Dendritic cell treated with granulocyte-macrophage colony-stimulating factor and Interleukin-4, amounts not matched to agents 40 ng/mL and 50 ng/mL, for 4 days (primary cell): ENCODE measurements at regions of chr3 and their contacts with region 1.

Region 1: DNA sequence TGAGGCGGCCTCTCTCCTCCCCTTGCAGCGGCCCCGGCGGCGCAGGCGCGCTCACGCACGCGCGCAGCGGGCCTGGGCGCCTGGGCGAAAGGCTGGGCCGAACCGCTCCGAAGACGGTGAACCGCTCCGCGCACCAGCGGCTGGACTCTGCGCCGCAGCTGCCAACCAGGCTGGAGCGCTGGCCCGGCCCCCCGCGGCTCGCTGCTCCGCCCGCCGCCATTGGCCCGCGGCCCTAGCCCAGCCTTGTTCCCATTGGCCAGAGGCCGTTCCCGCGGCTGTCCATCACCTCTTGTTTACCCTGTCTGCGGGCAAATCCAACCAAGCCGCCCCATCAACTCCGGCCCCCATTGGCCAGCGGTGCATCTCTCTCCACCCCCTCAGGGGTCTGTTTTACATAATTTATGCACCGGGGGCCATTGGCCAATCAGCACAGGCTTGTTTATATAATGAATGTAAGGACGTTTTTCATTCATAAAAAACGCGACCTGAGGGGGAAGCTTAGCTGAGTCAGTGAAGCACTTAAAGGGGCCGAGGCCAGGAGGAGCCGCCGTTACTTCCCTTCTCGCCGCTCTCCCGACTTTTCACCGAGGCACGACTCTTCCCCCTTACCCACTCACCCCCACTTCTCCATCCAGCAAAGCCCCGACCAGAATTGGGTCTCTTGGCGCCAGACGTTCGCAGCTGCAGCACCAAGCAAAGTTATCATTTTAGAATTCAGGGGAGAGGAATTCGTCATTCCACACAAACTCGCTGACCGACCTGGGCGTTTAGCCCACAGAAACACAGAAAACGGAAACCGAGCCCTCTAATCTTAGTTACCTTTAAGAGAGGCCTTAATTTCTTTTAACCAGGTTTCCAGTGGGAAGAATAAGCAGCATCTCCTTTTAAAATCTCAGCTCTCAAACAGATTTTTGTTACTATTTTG is at the start of gene ETV5:
- H3K4me3 Mint-ChIP-seq: peak within 1 kb of the TSS; percentile 85
- H3K27ac Mint-ChIP-seq: peak within 1 kb of the TSS; percentile 89
- H3K4me1 Mint-ChIP-seq: peaks cover 52% of the 10 kb centered on the region
- H3K27me3 Mint-ChIP-seq: peaks cover 73% of the 10 kb centered on the region

Region 2: GRCh38 chr3:185290266-185290665 is 818.9 kb before region 1 on chr3:
- intact Hi-C with region 1: no loop called
- H3K4me3 Mint-ChIP-seq: no peak overlapping the region
- H3K27ac Mint-ChIP-seq: no peak overlapping the region
- H3K4me1 Mint-ChIP-seq: peaks cover 1% of the 10 kb centered on the region
- H3K27me3 Mint-ChIP-seq: no peaks in the 10 kb centered on the region

Region 3: GRCh38 chr3:186241910-186242821 is 133.0 kb after region 1 on chr3:
- intact Hi-C with region 1: loop called (anchors 10 kb)
- H3K4me3 Mint-ChIP-seq: peak overlapping the region; percentile 56
- H3K27ac Mint-ChIP-seq: peak overlapping the region; percentile 23
- H3K4me1 Mint-ChIP-seq: peaks cover 15% of the 10 kb centered on the region
- H3K27me3 Mint-ChIP-seq: no peaks in the 10 kb centered on the region

Region 4: DNA sequence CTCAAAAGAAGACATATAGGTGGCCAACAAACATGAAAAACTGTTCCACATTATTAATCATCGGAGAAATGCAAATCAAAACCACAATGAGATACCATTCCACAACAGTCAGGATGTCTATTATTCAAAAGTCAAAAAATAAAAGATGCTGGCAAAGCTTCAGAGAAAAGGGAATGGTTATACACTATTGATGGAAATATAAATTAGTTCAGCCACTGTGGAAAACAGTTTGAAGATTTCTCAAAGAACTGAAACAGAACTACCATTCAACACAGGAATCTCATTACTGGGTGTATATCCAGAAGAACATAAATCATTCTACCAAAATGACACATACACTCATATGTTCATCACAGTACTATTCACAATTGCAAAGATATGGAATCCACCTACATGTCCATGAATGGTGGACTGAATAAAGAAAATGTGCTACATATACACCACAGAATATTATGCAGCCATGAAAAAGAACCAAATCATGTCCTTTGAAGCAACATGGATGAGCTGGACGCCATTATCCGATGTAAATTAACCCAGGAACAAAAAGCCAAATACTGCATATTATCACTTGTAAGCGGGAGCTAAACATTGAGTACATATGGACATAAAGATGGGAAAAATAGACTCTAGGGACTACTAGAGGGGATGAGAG is 285.5 kb after region 1 on chr3:
- intact Hi-C with region 1: no loop called
- H3K4me3 Mint-ChIP-seq: no peak overlapping the region
- H3K27ac Mint-ChIP-seq: no peak overlapping the region
- H3K4me1 Mint-ChIP-seq: no peaks in the 10 kb centered on the region
- H3K27me3 Mint-ChIP-seq: no peaks in the 10 kb centered on the region